Tibial artery (tissue), 4 donors: ENCODE measurements at regions of chr3 and their contacts with region 1.

Region 1: DNA sequence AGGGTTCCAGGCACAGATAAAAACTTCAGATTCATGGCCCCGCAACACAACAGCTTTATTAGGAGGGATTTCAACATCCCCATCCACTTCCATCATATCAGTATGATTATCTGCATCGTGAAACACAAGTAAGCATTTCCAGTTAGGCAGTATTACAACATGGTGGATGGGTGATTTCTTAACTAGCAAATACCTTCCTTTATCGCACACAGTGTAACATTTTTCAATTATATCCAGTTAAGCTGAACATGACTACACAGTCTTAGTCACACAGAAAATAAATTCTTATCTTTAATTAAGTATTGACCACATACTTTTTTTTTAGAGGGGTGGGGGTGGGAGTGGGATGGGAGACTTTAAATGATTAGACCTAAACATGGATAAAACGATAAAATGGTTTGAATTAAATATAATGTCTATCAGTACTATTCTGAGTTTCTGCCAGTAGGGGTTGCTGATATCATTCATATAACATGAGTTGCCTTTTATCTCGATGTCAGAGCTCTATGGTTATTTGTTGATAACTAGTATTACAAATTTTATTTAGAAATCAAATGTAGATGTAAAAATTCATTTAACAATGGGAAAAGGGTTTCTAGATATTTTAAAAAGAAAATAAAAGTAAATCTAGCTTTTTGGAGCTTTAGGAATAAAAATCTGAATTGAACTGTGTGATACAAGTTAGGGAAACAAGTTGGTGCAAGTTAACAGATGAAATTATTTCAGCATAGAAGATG is 146.6 kb downstream of the TBL1XR1 start:
- DNase-seq: no peak
- H3K4me3 ChIP-seq: no peak overlapping the region
- H3K27ac ChIP-seq: no peak overlapping the region
- H3K4me1 ChIP-seq: peaks cover 0 to 41% (median 11%) of the 10 kb centered on the region in 4 donors
- H3K27me3 ChIP-seq: no peaks in the 10 kb centered on the region
- CTCF ChIP-seq: peak; percentile 48 to 71

Region 2: DNA sequence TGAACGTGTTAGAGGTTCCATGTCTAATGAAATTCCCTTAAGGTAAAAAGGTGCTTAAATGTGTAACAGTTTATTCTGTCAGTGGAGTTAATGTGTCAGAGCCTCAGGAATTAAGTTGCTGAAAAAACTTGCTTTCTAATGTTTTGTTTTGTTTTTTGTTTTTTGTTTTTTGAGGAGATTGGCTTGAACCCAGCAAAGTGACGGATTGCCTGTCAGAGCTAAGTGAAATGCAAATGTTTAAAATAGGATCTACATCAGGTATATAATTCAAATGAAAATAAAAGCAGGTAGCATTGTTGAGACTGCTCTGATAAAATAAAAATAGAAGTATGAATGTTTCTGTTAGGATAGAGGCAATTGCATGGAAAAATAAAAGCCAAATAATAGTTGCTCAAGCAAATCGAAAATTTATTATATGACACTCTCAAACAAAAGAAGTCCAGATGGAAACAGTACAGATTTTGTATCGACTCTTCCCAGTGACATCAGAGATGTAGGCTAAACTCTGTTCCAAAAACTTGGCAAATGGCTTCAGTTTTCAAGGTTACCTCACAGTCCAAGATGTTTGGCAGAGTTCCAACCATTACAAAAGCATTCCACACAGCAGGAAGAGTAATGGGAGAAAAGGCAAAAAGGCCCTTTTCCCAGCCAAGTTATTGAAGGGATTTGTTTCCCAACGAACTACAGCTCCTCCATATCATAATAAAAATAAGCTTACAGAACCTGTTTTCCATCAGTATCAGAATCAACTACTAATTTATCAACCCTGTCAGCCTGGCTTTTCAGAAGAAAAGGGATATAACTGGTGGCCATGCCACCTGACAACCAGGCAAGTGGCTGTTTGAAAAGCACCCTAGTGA is 144.4 kb before region 1 on chr3:
- intact Hi-C with region 1: no loop called
- DNase-seq: no peak
- H3K4me3 ChIP-seq: no peak overlapping the region
- H3K27ac ChIP-seq: peak overlapping the region in 1 of 2 donors; percentile 24
- H3K4me1 ChIP-seq: peaks cover 0 to 29% (median 8%) of the 10 kb centered on the region in 4 donors
- H3K27me3 ChIP-seq: no peaks in the 10 kb centered on the region
- CTCF ChIP-seq: no peak

Region 3: GRCh38 chr3:177190756-177191681 is 140.3 kb after region 1 on chr3:
- intact Hi-C with region 1: loop called (anchors 2 kb)
- DNase-seq: no peak
- H3K4me3 ChIP-seq: no peak overlapping the region
- H3K27ac ChIP-seq: peak overlapping the region; percentile 49 to 55
- H3K4me1 ChIP-seq: peaks cover 0 to 45% (median 17%) of the 10 kb centered on the region in 4 donors
- H3K27me3 ChIP-seq: no peaks in the 10 kb centered on the region
- CTCF ChIP-seq: no peak

Region 4: DNA sequence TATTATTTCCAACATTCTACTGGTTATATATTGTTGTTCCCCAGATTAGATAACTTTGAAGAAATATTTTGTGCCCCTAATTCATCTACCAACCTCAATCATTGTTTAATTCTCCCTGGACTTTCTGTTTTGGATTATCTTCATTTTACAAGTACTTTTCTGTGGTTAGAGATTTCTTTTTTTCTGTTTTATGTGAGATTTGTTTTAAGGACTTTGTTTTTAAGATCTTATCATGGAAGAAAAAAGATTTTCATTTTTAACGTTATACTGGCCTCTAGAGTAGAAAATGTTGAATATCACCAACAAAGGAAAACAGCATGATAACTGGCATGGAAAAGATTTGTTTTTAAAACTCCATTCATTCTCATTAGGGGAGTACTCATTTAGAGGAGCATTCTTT is 1274.7 kb after region 1 on chr3:
- intact Hi-C with region 1: loop called (anchors 5 kb)
- DNase-seq: no peak
- H3K4me3 ChIP-seq: no peak overlapping the region
- H3K27ac ChIP-seq: peak overlapping the region in 1 of 2 donors; percentile 13
- H3K4me1 ChIP-seq: peaks cover 0 to 37% (median 8%) of the 10 kb centered on the region in 4 donors
- H3K27me3 ChIP-seq: no peaks in the 10 kb centered on the region
- CTCF ChIP-seq: peak; percentile 39 to 44

Region 5: DNA sequence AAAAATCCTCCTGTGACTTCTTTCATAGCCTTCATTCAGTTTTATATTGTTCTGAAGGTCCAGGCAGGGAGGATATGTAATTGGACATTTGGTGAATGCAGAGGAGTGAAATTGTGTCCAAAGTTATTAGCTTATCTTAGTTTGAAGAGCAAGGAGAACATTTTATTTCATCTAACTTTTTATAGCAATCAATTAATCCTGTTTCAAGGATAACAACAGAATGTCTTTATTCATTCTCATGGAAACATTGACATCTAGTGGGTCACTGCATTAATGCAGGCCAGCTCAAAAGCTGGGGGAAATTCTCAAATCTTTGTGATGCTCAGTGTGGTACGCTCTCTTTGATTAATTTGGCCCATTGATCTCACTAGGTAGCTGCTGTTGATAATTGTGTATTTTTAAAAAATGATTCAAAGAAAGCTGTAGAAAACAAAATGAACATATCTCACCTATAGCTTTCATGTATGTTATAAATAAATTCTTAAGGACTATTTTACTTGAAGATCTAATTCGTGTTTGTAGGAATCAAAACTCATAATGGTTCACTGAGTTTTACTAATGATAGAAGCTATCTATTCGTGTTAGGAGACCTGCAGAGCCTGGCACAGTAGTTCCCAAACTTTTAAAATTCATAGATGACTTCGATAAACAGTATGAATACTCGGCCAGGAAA is 1334.7 kb after region 1 on chr3:
- intact Hi-C with region 1: loop called (anchors 10 kb)
- DNase-seq: no peak
- H3K4me3 ChIP-seq: no peak overlapping the region
- H3K27ac ChIP-seq: peak overlapping the region; percentile 13 to 58
- H3K4me1 ChIP-seq: peaks cover 0 to 38% (median 11%) of the 10 kb centered on the region in 4 donors
- H3K27me3 ChIP-seq: no peaks in the 10 kb centered on the region
- CTCF ChIP-seq: peak; percentile 84 to 87